Mammary epithelial cell (primary cell): ENCODE measurements at regions of chr3 and their contacts with region 1.

Region 1: GRCh38 chr3:196778755-196779154 is 39.1 kb downstream of the PAK2 start:
- DNase-seq: peak; percentile 84
- H3K4me3 ChIP-seq: no peak overlapping the region
- H3K27ac ChIP-seq: peak overlapping the region; percentile 4
- H3K4me1 ChIP-seq: peaks cover 32% of the 10 kb centered on the region
- H3K27me3 ChIP-seq: no peaks in the 10 kb centered on the region
- CTCF ChIP-seq: no peak

Region 2: GRCh38 chr3:196292291-196292923 is 486.3 kb before region 1 on chr3:
- CTCF ChIA-PET with region 1: no interaction called
- dilution Hi-C with region 1: no loop called
- in situ Hi-C with region 1: no loop called
- intact Hi-C with region 1: no loop called
- DNase-seq: no peak
- H3K4me3 ChIP-seq: no peak overlapping the region
- H3K27ac ChIP-seq: no peak overlapping the region
- H3K4me1 ChIP-seq: peaks cover 4% of the 10 kb centered on the region
- H3K27me3 ChIP-seq: no peaks in the 10 kb centered on the region
- CTCF ChIP-seq: peak in 1 of 2 donors; percentile 16

Region 3: DNA sequence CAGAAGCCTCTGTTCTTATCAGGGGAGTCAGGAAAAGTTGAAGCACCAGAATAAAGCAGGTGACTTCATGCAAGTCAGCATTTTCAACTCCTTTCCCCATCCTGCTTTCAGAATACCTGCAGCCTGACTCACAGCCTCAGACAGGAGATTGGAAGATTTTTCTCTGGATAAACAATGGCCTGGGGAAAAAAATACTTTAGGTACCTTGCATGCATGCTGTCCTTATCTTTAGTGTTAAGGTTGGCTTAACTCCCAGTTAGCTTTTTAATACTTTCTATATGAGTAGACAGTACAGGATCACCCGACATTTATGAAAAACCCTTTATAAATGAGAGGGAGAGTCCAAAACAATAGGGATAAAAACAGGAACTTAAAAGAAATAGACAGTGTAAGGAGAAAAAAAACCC is 14.5 kb after region 1 on chr3:
- CTCF ChIA-PET with region 1: no interaction called
- dilution Hi-C with region 1: no loop called
- in situ Hi-C with region 1: no loop called
- intact Hi-C with region 1: loop called (anchors 2 kb)
- DNase-seq: peak; percentile 94
- H3K4me3 ChIP-seq: peak overlapping the region in 1 of 3 experiments; percentile 16
- H3K27ac ChIP-seq: peak overlapping the region; percentile 37
- H3K4me1 ChIP-seq: peaks cover 29% of the 10 kb centered on the region
- H3K27me3 ChIP-seq: no peaks in the 10 kb centered on the region
- CTCF ChIP-seq: no peak